ENCODE measurements at regions of chr15 and their contacts with region 1.

Region 1: DNA sequence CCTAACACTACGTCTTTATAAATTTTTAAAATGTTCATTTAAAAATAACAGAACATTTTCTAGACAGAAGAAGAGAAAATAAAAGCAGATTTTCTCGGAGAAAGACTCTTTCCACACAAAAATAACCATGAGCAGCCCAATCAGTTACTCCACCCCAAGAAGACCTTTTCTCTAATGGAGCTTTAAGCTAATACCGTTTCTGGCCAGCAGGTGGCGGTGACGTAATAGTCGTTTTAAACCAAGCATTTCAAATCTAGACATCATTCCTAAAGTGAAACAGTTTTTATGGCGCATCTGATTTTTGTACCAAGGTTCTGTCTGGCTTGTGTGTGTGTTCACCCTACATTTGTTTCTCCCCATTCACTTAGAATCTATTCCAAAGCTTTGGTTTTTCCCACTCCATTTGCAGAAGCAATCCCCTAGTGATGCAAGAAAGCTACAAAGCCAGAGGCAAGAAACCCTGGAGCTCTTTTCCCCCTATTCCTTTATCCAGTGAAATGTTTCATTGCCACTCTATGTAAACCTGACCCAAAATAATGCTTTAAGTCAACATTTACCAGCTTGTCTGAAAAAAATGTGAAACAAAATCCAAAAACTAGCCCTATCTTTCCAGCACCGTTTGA is 336.7 kb upstream of the IGF1R start:
- DNase-seq: peak; percentile 17
- H3K4me3 ChIP-seq: no peak overlapping the region
- H3K27me3 ChIP-seq: no peaks in the 10 kb centered on the region
- CTCF ChIP-seq: peak; percentile 80

Region 2: GRCh38 chr15:98321896-98322295 is 10.2 kb after region 1 on chr15:
- CTCF ChIA-PET with region 1: interaction called, 10 read pairs
- POLR2A ChIA-PET with region 1: no interaction called
- DNase-seq: no peak
- H3K4me3 ChIP-seq: no peak overlapping the region
- H3K27me3 ChIP-seq: no peaks in the 10 kb centered on the region
- CTCF ChIP-seq: no peak

Region 3: DNA sequence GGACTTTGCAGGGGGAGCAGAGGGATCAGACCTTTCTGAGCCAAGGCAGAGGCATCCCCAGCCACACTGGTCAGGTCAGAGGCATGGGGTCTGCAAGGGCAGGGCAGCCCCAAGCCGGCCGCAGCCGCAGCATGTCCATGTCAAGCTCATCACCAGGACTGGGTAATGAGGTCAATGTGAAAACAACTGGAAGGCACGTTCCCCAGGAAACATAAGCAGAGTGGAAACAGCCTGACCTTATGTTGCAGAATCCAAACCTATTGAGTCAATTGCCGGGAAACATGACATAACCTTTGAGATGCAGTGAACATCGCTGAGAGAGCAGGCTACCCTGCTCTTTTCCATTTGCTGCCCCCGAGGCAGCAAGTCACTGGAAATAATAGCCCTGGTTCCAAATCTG is 21.6 kb after region 1 on chr15:
- CTCF ChIA-PET with region 1: interaction called, 13 read pairs
- POLR2A ChIA-PET with region 1: no interaction called
- DNase-seq: no peak
- H3K4me3 ChIP-seq: no peak overlapping the region
- H3K27me3 ChIP-seq: peaks cover 2% of the 10 kb centered on the region; the same call in 1 of the 2 replicates
- CTCF ChIP-seq: no peak

Region 4: DNA sequence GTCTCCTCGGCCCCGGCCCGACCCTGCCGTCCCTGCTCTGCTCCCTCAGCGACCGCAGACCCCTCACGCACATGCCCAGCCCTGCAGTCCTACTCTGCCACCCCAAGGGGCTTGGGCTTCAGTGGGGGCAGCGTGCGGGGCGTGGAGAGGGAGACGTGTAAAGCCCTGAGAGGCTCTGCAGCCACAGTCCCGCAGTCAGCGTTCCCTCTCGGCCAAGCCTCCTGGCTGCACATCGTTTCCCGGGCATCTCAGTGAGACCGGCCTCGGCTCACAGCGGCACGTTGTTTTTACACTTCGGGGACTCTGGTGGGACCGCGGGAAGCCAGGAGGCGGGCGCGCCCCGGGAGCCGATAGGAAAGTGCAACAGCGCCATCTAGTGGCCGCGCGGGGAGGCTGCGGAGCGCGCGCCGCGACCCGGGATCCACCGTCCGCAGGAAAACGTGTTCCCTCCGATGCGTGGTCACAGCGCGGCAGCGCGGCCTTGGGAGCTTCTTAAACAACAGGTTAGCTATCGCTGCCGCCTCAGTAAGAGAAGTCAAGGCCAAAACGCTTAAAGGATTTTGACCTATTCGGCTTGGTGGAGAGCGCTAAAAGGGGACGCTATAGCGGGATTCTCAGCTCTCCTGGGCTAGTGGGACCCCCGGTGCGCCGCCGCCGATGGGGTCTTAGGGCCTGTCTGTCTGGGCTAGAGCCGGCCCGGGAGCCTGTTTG is 109.9 kb after region 1 on chr15:
- CTCF ChIA-PET with region 1: interaction called, 57 read pairs
- POLR2A ChIA-PET with region 1: no interaction called
- DNase-seq: no peak
- H3K4me3 ChIP-seq: peak overlapping the region; percentile 21
- H3K27me3 ChIP-seq: peaks cover 12% of the 10 kb centered on the region
- CTCF ChIP-seq: peak; percentile 98

Region 5: DNA sequence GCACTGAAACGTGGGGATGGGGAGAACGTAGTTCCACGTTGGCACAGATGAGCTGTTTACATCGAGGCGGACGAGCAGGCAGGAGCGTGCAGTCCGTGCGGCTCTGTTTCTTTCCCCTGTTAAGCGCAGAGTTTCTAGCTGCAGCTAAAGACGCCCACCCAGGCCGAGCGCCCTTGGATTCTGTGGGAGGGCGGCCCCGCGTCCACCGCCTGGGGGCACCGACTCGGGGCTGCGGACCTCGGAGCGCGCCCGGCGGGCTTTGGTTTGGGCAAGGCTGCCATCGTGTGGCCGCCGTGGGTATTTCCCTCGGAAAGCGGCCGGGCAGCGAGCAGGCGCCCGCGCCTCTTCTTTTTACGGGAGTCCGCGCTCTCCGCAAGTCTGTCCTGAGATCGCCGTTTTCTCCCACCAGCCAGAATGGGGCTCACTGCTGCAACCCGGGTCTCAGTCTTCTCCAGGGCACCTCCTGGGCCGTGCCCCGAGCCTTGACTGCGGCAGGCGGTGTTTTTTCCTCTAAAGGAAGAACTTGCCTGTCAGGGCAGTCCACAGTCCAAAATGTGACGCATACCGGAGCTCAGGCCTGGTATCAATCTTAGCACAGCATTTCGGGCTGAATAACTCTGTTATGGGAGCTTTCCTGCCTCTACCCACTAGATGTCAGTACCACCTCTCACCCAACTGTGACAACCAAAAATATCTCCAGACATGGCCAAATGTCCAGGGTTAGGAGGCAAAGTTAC is 116.7 kb after region 1 on chr15:
- CTCF ChIA-PET with region 1: interaction called, 57 read pairs
- POLR2A ChIA-PET with region 1: no interaction called
- DNase-seq: peak; percentile 9
- H3K4me3 ChIP-seq: peak overlapping the region; percentile 40
- H3K27me3 ChIP-seq: peaks cover 3% of the 10 kb centered on the region
- CTCF ChIP-seq: peak; percentile 78